HCT116 (cell line): ENCODE measurements at regions of chr4 and their contacts with region 1.

Region 1: DNA sequence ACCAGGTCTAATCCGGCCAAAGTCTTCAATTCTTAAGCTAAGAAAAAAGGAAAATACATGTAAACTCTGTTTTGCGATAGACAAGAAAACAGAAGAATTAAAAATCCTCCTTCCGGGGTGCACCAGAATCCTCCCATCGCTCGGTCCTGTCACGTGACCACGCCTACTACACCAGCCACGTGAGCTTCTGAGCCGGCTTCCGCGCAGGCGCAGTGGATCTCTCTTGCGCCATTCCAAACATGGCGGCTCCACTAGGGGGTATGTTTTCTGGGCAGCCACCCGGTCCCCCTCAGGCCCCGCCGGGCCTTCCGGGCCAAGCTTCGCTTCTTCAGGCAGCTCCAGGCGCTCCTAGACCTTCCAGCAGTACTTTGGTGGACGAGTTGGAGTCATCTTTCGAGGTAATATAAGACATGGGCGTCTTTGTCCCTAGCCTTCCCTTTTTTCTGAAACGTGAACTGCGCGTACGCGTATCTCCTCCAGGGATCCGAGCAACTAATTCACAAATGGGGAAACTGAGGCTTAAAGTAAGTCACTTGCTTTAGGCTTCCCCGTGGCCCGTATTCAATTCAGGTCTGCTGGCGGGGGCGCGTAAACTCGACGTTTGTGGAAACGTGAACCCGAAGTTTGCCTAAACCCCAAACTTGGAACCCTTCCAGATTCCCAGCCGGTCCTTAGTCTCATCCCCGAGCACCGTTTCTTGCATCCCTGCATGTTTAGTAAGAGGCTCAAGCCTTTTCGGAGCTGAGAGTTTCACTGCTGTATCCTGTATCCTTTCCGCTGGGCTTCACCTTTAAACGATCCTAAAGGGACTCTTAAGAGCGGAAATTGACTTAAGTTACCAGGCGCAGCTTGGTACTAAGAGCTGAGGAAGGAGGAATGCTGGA is at the start of gene MED28:
- DNase-seq: peak; percentile 87
- ATAC-seq: peak; percentile 87
- H3K4me3 ChIP-seq: peak within 1 kb of the TSS; percentile 89 to 91
- H3K27ac ChIP-seq: peak within 1 kb of the TSS; percentile 48
- H3K4me1 ChIP-seq: peaks cover 5 to 12% of the 10 kb centered on the region in 2 experiments; a peak in 3 of 4 replicates
- H3K27me3 ChIP-seq: no peaks in the 10 kb centered on the region
- CTCF ChIP-seq: no peak
- POLR2A ChIP-seq: peak; percentile 92
- RAD21 ChIP-seq: no peak
- total RNA-seq, gene MED28: 48.8 TPM

Region 2: GRCh38 chr4:17576932-17577665 is 37.6 kb before region 1 on chr4 and contains the start of gene LAP3:
- CTCF ChIA-PET with region 1: no interaction called
- POLR2A ChIA-PET with region 1: no interaction called
- RAD21 ChIA-PET with region 1: no interaction called
- intact Hi-C with region 1: loop called (anchors 2 kb)
- DNase-seq: peak; percentile 88
- ATAC-seq: peak; percentile 94
- H3K4me3 ChIP-seq: peak within 1 kb of the TSS; percentile 62 to 78
- H3K27ac ChIP-seq: peak within 1 kb of the TSS; percentile 76
- H3K4me1 ChIP-seq: peaks cover 6 to 18% of the 10 kb centered on the region in 2 experiments; a peak in 3 of 4 replicates
- H3K27me3 ChIP-seq: no peaks in the 10 kb centered on the region
- CTCF ChIP-seq: no peak
- POLR2A ChIP-seq: peak; percentile 71
- RAD21 ChIP-seq: no peak
- total RNA-seq, gene LAP3: 59.9 TPM

Region 3: DNA sequence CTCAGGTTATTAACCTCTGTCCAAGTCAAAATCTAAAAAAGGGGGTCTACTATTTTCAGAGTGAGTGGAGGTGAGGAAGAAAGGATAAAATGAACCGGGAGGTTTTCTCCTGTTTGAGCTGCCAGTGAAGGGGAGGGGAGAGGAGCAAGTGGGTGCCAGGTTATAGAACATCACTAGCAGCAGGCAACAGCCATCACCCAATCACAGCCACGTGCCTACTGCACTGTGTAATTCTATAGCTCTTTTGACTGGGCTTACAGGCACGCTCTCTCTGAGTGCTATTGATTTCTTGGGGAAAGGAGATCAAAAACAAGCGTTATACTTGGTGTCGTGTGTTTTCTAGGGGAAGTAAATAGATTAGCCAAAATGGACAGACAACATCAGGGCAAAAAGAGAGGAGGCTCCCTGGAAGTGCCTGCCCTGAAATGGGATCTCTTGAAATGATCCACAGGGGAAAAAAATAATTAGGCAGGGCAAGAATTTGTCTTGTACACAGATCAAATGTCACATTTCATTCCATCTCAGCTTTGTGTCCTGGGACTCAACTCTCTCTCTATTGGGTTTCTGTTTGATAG is 707.4 kb after region 1 on chr4:
- CTCF ChIA-PET with region 1: no interaction called
- POLR2A ChIA-PET with region 1: no interaction called
- RAD21 ChIA-PET with region 1: no interaction called
- intact Hi-C with region 1: no loop called
- DNase-seq: no peak
- ATAC-seq: no peak
- H3K4me3 ChIP-seq: no peak overlapping the region
- H3K27ac ChIP-seq: no peak overlapping the region
- H3K4me1 ChIP-seq: no peaks in the 10 kb centered on the region
- H3K27me3 ChIP-seq: no peaks in the 10 kb centered on the region
- CTCF ChIP-seq: no peak
- POLR2A ChIP-seq: no peak
- RAD21 ChIP-seq: no peak